PC-9 (cell line): ENCODE measurements at regions of chr1 and their contacts with region 1.

Region 1: GRCh38 chr1:201488817-201489589 is 17.9 kb downstream of the CSRP1 start:
- DNase-seq: peak; percentile 92 to 95
- H3K4me3 ChIP-seq: no peak overlapping the region
- H3K27ac ChIP-seq: peak overlapping the region; percentile 78
- H3K4me1 ChIP-seq: peaks cover 43% of the 10 kb centered on the region
- H3K27me3 ChIP-seq: no peaks in the 10 kb centered on the region
- CTCF ChIP-seq: no peak

Region 2: GRCh38 chr1:201456499-201457309 is 32.3 kb before region 1 on chr1:
- CTCF ChIA-PET with region 1: no interaction called
- POLR2A ChIA-PET with region 1: interaction called, 4 read pairs
- intact Hi-C with region 1: loop called (anchors 2 kb)
- DNase-seq: peak; percentile 76 to 96
- H3K4me3 ChIP-seq: no peak overlapping the region
- H3K27ac ChIP-seq: peak overlapping the region; percentile 95
- H3K4me1 ChIP-seq: peaks cover 56% of the 10 kb centered on the region
- H3K27me3 ChIP-seq: no peaks in the 10 kb centered on the region
- CTCF ChIP-seq: no peak

Region 3: DNA sequence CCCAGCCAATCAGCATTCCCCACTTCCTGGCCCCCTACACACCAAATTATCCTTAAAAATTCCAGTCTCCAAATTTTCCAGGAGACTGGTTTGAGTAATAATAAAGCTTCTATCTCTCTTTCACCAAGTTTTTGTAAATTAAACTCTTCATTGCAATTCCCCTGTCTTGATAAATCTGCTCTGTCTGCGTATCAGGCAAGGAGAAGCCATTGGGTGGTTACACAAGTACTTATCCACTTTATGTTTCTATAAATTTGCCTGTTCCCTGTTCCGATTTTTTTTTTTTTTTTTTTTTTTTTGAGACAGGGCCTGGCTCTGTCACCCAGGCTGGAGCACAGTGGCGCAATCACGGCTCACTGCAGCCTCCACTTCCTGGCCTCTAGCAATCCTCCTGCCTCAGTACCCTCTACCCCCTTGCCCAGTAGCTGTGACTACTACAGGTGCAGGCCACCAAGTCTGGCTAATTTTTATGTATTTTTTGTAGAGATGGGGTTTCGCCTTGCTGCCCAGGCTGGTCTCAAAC is 29.0 kb after region 1 on chr1:
- CTCF ChIA-PET with region 1: interaction called, 12 read pairs
- POLR2A ChIA-PET with region 1: no interaction called
- intact Hi-C with region 1: loop called (anchors 1 kb)
- DNase-seq: no peak
- H3K4me3 ChIP-seq: no peak overlapping the region
- H3K27ac ChIP-seq: peak overlapping the region; percentile 88
- H3K4me1 ChIP-seq: peaks cover 44% of the 10 kb centered on the region
- H3K27me3 ChIP-seq: no peaks in the 10 kb centered on the region
- CTCF ChIP-seq: no peak